Tibial artery (tissue), 4 donors: ENCODE measurements at regions of chr13 and their contacts with region 1.

Region 1: GRCh38 chr13:29522044-29522685 is 73.3 kb downstream of the SLC7A1 start:
- DNase-seq: peak; percentile 72 to 76
- H3K4me3 ChIP-seq: no peak overlapping the region
- H3K27ac ChIP-seq: peak overlapping the region; percentile 60 to 62
- H3K4me1 ChIP-seq: peaks cover 0 to 31% (median 7%) of the 10 kb centered on the region in 4 donors
- H3K27me3 ChIP-seq: no peaks in the 10 kb centered on the region
- CTCF ChIP-seq: no peak

Region 2: DNA sequence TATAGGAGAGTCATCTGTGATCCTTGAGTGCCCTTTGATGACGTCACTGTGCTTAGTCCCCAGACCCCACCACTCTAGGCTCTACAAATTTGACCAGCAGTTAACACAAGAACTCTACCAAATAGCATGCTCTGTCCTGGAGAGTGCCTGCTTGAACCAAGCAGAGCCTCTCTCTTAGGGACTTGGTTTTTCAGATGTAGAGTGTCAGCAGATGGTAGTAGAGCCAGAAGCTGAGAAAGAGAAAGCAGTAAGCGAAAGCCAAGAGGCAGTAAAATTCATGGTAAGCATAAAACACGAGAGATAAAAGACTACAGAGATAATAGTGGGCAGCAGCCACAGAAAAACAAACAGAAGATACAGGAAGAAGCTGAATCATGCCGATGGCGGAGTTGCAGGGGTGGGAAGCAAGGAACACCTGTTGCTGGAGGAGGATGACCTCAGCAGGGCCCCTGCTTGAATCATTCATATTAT is 120.0 kb before region 1 on chr13:
- intact Hi-C with region 1: no loop called
- DNase-seq: no peak
- H3K4me3 ChIP-seq: no peak overlapping the region
- H3K27ac ChIP-seq: no peak overlapping the region
- H3K4me1 ChIP-seq: no peaks in the 10 kb centered on the region
- H3K27me3 ChIP-seq: peaks cover 0 to 3% of the 10 kb centered on the region in 2 donors
- CTCF ChIP-seq: no peak

Region 3: GRCh38 chr13:29583073-29583785 is 61.1 kb after region 1 on chr13:
- intact Hi-C with region 1: loop called (anchors 10 kb)
- DNase-seq: no peak
- H3K4me3 ChIP-seq: no peak overlapping the region
- H3K27ac ChIP-seq: no peak overlapping the region
- H3K4me1 ChIP-seq: peaks cover 0 to 80% (median 30%) of the 10 kb centered on the region in 4 donors
- H3K27me3 ChIP-seq: no peaks in the 10 kb centered on the region
- CTCF ChIP-seq: no peak